ENCODE measurements at regions of chr5 and their contacts with region 1.

Region 1: DNA sequence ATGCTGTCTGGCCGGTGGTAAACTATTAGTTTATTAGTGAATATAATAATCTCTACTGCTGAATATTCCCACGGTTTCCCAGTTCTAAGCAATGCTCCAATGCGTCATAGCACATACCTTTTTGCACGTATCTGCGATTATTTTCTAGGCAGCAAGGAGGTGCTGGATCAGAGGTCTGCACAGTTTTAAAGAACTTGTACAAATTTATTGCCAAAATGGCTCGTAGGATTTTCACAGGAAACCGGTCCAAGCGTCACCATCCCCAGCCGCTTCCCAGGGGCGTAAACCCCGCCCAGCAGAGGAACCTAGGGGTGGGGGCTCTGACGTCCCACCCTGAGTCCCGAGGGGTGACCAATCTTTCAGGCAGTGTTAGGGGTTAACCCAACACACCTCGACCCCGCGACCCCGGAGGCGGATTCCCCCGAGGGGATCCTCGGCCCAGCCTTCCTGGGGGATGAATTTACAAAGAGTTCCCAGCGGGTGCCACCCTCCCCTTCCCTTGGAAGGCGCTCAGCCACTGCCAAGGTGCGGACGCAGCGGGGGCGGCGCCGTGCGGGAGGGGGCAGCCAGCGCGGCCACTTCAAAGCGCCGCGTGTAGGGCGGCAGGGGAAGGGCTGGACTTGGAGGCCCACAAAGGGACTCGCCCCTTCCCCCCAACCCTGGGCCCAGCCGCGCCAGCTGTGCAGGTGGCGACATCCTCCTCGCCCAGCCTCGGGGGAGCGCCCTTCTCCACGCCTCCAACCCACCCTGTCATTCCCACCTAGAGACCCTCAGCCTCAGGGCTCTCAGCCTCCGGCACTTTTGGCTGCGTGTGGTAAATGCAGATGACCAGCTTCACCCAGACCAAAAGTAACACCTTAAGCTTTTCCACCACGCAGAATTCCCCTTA is 43.5 kb upstream of the TCF7 start:
- DNase-seq: peak; percentile 69
- ATAC-seq: peak; percentile 72
- H3K4me3 ChIP-seq: peak overlapping the region; percentile 69
- H3K27ac ChIP-seq: peak overlapping the region; percentile 66
- H3K4me1 ChIP-seq: peaks cover 33% of the 10 kb centered on the region
- H3K27me3 ChIP-seq: no peaks in the 10 kb centered on the region
- CTCF ChIP-seq: peak; percentile 5 to 27 (median 14); a peak in 3 of 6 replicates
- EP300 ChIP-seq: no peak
- POLR2A ChIP-seq: peak; percentile 60
- RAD21 ChIP-seq: no peak

Region 2: DNA sequence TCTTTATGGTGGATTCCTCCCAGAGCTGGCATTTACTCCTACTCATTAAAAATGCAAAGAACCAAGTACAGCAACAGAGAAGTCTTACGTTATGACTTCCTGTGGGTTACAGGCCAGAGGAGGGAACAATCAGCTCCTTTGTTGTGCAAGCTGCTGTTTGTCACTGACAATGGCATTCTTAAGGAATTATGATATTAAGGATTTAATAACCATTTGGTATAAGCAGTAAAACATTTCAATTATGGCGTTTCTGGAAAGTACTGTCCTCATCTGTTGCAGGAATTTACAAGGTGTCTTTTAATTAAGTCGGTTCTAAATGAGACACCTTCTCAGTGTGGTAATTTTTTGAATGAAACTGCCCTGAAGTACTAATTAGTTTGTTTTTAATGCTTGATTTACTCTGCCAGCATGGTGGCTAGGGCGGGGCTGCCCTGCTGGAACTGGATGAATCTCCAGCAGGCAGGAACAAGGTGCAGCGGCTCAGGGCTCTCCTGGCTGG is 17.1 kb before region 1 on chr5:
- CTCF ChIA-PET with region 1: interaction called, 6 read pairs
- POLR2A ChIA-PET with region 1: interaction called, 13 read pairs
- RAD21 ChIA-PET with region 1: interaction called, 4 read pairs
- SMC1A ChIA-PET with region 1: interaction called, 7 read pairs
- in situ Hi-C with region 1: no loop called
- intact Hi-C with region 1: no loop called
- DNase-seq: no peak
- ATAC-seq: peak; percentile 89
- H3K4me3 ChIP-seq: no peak overlapping the region
- H3K27ac ChIP-seq: no peak overlapping the region
- H3K4me1 ChIP-seq: peaks cover 11% of the 10 kb centered on the region
- H3K27me3 ChIP-seq: no peaks in the 10 kb centered on the region
- CTCF ChIP-seq: no peak
- EP300 ChIP-seq: no peak; a peak in 1 of 4 replicates
- POLR2A ChIP-seq: no peak
- RAD21 ChIP-seq: no peak

Region 3: DNA sequence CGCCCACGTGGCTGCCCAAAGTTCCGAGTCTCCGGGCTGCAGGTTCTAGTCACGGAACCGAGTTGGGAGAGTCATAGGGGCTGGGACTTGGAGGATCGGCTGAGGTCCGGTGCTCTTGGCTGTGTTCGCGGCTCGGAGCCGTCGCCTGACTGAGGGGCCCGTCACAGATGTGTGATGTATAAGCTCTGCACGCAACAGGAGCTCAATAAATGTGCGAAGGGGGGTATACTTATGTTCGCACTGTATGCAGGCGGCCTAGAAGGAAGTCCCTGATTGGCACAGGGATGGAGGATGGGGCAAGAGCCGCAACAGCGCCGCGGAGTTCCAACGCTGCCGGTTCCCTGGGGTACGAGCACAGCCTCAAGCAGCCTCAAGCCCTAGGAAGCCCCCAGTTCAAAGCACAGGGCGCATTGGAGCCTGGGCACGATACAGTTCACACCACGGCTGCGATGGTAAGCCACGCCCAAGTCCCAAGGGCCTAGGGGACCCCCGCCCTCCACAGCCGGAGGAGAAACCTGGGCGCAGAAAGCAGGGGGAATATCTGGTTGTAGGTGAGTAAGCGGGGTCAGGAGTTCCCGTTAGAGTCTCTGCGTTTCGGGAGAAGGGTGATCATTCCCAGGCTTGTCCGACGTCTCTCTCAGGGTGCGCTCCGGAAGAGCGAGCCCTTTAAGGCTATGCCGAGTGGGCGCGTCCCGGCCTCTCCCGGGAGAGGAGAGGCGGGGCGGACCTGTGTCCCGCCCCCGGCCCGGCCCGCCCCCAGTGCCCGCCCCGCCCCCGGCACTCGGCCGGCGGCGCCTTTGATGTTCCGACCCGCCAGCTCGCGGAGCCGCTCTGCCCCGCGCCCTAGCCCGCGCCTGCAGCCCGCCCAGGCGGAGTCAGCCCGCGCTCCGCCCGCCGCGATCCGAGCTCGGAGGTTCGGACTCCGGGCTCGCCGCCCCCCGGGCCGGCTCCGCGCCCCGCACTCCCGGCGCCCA is 43.2 kb after region 1 on chr5 and contains the start of gene TCF7:
- CTCF ChIA-PET with region 1: interaction called, 7 read pairs
- POLR2A ChIA-PET with region 1: interaction called, 9 read pairs
- RAD21 ChIA-PET with region 1: interaction called, 11 read pairs
- SMC1A ChIA-PET with region 1: interaction called, 11 read pairs
- in situ Hi-C with region 1: no loop called
- intact Hi-C with region 1: no loop called
- DNase-seq: no peak
- ATAC-seq: peak; percentile 82
- H3K4me3 ChIP-seq: peak within 1 kb of the TSS; percentile 83
- H3K27ac ChIP-seq: peak within 1 kb of the TSS; percentile 56
- H3K4me1 ChIP-seq: peaks cover 40% of the 10 kb centered on the region
- H3K27me3 ChIP-seq: no peaks in the 10 kb centered on the region; a peak in 1 of 4 replicates
- CTCF ChIP-seq: no peak
- EP300 ChIP-seq: no peak
- POLR2A ChIP-seq: peak; percentile 72
- RAD21 ChIP-seq: no peak
- polyA plus RNA-seq, gene TCF7: 10.0 to 13.2 TPM

Region 4: GRCh38 chr5:134132372-134133034 is 61.5 kb after region 1 on chr5:
- CTCF ChIA-PET with region 1: interaction called, 8 read pairs
- POLR2A ChIA-PET with region 1: interaction called, 6 read pairs
- RAD21 ChIA-PET with region 1: interaction called, 34 read pairs
- SMC1A ChIA-PET with region 1: interaction called, 30 read pairs
- in situ Hi-C with region 1: no loop called
- intact Hi-C with region 1: loop called (anchors 2 kb)
- DNase-seq: peak; percentile 92
- ATAC-seq: peak; percentile 85
- H3K4me3 ChIP-seq: peak overlapping the region; percentile 49; the same call in 1 of the 2 replicates
- H3K27ac ChIP-seq: peak overlapping the region; percentile 98
- H3K4me1 ChIP-seq: peaks cover 71% of the 10 kb centered on the region
- H3K27me3 ChIP-seq: no peaks in the 10 kb centered on the region
- CTCF ChIP-seq: peak; percentile 65 to 80 (median 75)
- EP300 ChIP-seq: peak; percentile 96 to 98
- POLR2A ChIP-seq: peak; percentile 47
- RAD21 ChIP-seq: peak; percentile 76

Region 5: GRCh38 chr5:134145779-134146581 is 75.0 kb after region 1 on chr5:
- CTCF ChIA-PET with region 1: interaction called, 39 read pairs
- POLR2A ChIA-PET with region 1: interaction called, 5 read pairs
- RAD21 ChIA-PET with region 1: interaction called, 34 read pairs
- SMC1A ChIA-PET with region 1: interaction called, 30 read pairs
- in situ Hi-C with region 1: no loop called
- intact Hi-C with region 1: no loop called
- DNase-seq: no peak
- ATAC-seq: peak; percentile 86
- H3K4me3 ChIP-seq: no peak overlapping the region
- H3K27ac ChIP-seq: 0 out of 2 replicates have a peak overlapping the region, but pooled peaks have one; percentile 22
- H3K4me1 ChIP-seq: peaks cover 3% of the 10 kb centered on the region
- H3K27me3 ChIP-seq: no peaks in the 10 kb centered on the region
- CTCF ChIP-seq: peak; percentile 92 to 96 (median 94)
- EP300 ChIP-seq: no peak
- POLR2A ChIP-seq: no peak
- RAD21 ChIP-seq: peak; percentile 85

Measured in GM12878 (cell line).